HEK293T (cell line): ENCODE measurements at regions of chr17 and their contacts with region 1.

Region 1: DNA sequence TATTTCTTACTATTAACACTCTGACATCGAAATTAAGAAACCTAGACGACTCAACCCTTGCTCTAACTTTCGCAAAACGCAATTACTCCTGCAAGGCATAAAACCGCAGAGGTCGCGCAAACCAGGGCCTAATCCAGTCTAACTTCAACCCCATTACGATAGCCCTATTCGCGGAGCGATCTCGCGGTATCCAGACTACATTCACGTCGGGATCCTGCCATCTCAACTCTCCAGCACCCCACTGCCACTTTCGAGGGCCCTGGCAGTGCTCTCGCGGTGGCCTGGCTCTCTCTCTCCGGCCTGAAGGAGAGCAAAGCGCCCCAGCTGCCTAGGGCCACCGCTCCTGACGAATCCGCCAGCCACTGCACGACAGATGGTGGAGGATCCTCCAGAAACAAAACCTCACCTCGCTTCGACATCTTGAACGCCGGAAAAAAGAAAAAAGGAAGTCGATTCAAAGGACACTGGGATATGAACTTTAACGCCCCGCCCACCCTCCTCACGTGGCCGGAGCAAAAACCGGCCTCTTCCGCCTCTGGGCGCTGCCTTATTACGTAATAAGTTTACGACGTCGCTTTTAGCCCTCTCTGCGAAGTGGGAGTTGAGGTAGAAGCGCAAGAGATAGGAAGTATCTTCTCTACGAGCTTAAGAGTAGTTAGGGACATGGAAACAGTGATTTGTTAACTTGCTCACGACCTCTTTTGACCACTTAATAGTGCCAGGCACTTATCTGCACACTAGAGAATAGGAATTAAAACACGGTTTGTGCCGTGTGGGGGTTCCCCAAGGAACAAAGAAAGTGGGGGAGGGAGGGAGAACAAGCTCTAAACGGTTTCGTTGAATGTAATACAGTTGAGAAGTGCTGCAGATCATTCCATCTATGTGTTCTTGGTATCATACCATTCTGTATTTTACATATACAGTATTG is at the start of gene RPL23:
- DNase-seq: peak; percentile 80

Region 2: GRCh38 chr17:38584350-38584925 is 269.1 kb before region 1 on chr17:
- CTCF ChIA-PET with region 1: no interaction called
- POLR2A ChIA-PET with region 1: no interaction called
- DNase-seq: peak; percentile 73

Region 3: DNA sequence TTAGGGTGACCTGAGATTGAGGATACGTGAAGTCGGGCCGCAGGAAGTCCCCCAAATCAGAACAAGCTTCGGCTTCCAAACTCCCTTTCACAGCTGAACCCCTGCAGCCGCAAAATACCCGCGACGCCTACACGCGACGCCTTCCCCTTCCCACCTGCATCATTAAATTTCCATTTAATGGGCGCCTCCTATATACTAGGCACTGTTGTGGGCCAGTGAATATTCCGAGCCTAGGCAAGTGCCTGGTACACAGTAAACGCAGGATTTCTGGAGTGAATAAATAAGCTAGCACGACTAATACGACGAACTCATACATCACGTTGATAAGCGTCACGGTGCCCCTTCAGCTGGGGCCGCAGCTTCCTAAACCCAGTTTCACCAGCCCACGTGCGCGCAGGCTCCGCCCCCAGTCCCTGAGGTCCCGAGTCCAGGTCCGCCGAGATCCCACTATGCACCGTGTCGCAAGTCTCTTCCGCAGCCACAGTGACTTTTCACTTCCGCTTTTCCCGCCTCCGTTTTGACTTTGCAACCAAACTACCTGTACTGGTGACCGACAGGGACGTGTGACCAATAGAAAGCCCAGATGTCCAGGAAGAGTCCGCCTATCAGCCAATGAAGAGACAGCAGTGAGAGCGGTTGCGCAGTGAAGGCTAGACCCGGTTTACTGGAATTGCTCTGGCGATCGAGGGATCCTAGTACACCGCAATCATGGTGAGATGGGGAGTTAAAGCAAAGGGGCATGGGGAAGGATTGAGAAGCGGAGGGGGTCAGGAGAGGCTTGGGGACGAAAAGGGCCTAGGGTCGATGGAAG is 101.2 kb before region 1 on chr17 and contains the start of gene PSMB3:
- CTCF ChIA-PET with region 1: no interaction called
- POLR2A ChIA-PET with region 1: interaction called, 15 read pairs
- DNase-seq: peak; percentile 87

Region 4: GRCh38 chr17:38824899-38825761 is 28.4 kb before region 1 on chr17 and contains the start of gene CWC25:
- CTCF ChIA-PET with region 1: no interaction called
- POLR2A ChIA-PET with region 1: interaction called, 27 read pairs
- DNase-seq: peak; percentile 86

Region 5: GRCh38 chr17:38841141-38841485 is 12.4 kb before region 1 on chr17:
- CTCF ChIA-PET with region 1: no interaction called
- POLR2A ChIA-PET with region 1: interaction called, 73 read pairs
- DNase-seq: no peak

Region 6: DNA sequence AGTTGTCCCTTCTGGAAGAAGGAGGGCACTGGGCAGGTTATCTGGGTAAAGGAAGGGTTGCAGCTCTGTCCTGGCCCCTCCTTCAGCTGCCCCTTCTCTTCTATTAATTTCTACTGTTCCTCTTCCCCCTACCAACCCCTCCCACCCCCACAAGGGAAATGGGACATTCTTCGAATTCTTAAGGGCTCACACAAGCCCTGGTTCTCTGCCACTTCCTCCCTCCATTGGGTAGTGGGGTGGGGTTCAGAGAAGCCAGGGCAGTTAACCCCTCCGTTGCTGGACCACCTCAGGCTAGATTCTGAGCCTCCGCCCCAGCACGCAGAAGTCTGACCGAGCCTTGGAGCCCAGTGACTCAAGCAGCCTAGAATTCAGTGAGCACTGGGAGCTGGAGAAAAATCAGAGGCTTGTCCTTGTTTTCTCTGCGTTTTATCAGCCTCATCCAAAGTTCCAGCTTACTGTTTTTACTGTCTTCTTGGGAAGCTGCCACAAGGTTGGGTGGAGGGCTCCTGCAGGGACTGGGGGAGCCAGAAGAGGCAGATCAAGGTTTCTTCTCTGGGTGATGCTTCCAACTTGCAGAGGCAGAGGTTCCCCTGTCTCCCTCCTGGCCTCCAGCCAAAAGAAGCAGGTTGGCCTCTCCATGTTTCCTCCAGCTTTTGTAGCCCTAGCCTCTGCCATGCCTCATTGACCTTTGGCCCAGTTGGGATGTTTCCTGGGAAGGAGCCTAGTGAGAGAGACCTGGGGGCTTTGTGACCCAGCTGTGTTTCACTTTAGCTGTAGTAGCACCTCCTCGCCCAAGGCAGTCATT is 26.5 kb after region 1 on chr17:
- CTCF ChIA-PET with region 1: no interaction called
- POLR2A ChIA-PET with region 1: interaction called, 10 read pairs
- DNase-seq: no peak

Region 7: DNA sequence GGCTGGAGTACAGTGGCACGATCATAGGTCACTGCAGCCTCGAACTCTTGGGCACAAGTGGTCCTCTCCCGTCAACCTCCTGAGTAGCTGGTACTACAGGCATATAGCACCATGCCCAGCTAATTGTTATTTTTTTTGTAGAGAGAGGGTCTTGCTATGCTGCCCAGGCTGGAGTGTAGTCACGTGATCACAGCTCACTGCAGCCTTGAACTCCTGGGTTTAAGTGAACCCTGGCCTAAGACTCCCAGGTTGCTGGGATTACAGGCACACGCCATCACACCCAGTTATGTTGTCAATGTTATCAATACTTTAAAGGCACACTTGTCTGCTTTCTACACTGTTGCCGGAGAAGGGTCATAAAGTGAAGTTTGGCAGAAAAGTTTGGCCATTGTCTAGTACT is 49.8 kb after region 1 on chr17:
- CTCF ChIA-PET with region 1: no interaction called
- POLR2A ChIA-PET with region 1: no interaction called
- DNase-seq: no peak

Region 8: GRCh38 chr17:38940404-38940803 is 86.8 kb after region 1 on chr17:
- CTCF ChIA-PET with region 1: no interaction called
- POLR2A ChIA-PET with region 1: no interaction called
- DNase-seq: no peak